ENCODE measurements at regions of chr10 and their contacts with region 1.

Region 1: DNA sequence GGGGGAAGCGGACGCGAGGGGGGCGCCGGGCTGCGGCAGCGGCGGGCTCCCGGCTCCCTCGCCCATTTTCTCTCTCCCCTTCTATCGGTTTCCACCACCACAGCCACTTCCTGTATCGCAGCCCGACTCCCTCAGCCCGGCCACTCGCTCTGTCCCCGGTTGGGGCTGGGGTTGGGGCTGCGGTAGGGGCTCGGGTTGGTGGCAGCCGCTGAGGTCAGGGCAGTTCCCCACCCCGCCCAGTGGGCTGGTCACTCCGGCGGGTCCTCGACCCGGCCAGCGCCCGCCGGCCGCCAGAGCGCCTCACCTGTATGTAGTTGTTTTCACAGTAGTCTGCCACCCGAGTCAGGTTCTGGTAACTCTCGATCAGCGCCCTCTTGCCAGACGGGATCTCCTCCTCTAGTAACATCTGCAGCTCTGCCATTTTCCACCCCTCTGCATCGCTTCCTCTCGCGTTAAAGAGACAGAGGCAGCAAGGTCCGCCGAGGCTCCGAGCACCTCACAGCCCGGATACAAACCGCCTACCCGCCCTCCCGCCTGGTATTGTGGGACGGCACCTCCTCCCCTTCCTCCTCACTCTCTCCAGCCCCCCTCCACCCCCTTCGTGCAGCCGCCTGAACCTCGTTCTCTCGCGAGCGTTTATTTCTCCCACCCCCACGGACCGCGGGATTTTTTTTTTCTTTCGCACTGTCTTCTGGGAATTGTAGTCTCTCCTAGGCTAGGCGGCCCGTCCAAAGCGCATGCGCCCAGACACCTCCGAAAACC is at the start of gene ABI1:
- DNase-seq: peak; percentile 94 to 99 (median 97)
- ATAC-seq: peak; percentile 91
- H3K4me3 ChIP-seq: peak within 1 kb of the TSS; percentile 74 to 98
- H3K4me3 Mint-ChIP-seq: peak within 1 kb of the TSS; percentile 95
- H3K27ac ChIP-seq: peak within 1 kb of the TSS; percentile 88 to 93
- H3K27ac Mint-ChIP-seq: peak within 1 kb of the TSS; percentile 97
- H3K4me1 ChIP-seq: peaks cover 30% of the 10 kb centered on the region
- H3K4me1 Mint-ChIP-seq: peaks cover 29% of the 10 kb centered on the region
- H3K27me3 ChIP-seq: peaks cover 0 to 2% of the 10 kb centered on the region in 2 experiments
- H3K27me3 Mint-ChIP-seq: peaks cover 3% of the 10 kb centered on the region
- CTCF ChIP-seq: no peak
- total RNA-seq, gene ABI1: 91.6 to 94.5 TPM

Region 2: GRCh38 chr10:26437637-26438461 is 422.8 kb before region 1 on chr10 and contains the start of gene APBB1IP:
- CTCF ChIA-PET with region 1: no interaction called
- POLR2A ChIA-PET with region 1: no interaction called
- intact Hi-C with region 1: loop called (anchors 5 to 10 kb)
- DNase-seq: peak; percentile 28 to 79 (median 57)
- ATAC-seq: peak; percentile 43
- H3K4me3 ChIP-seq: peak within 1 kb of the TSS; percentile 85 to 94
- H3K4me3 Mint-ChIP-seq: peak within 1 kb of the TSS; percentile 93
- H3K27ac ChIP-seq: peak within 1 kb of the TSS; percentile 83 to 90
- H3K27ac Mint-ChIP-seq: peak within 1 kb of the TSS; percentile 98
- H3K4me1 ChIP-seq: peaks cover 40% of the 10 kb centered on the region
- H3K4me1 Mint-ChIP-seq: peaks cover 52% of the 10 kb centered on the region
- H3K27me3 ChIP-seq: no peaks in the 10 kb centered on the region
- H3K27me3 Mint-ChIP-seq: no peaks in the 10 kb centered on the region
- CTCF ChIP-seq: no peak
- total RNA-seq, gene APBB1IP: 36.4 to 36.8 TPM

Region 3: GRCh38 chr10:26516540-26517101 is 344.0 kb before region 1 on chr10:
- CTCF ChIA-PET with region 1: no interaction called
- POLR2A ChIA-PET with region 1: no interaction called
- intact Hi-C with region 1: no loop called
- DNase-seq: no peak
- ATAC-seq: no peak
- H3K4me3 ChIP-seq: no peak overlapping the region
- H3K4me3 Mint-ChIP-seq: no peak overlapping the region
- H3K27ac ChIP-seq: no peak overlapping the region
- H3K27ac Mint-ChIP-seq: no peak overlapping the region
- H3K4me1 ChIP-seq: no peaks in the 10 kb centered on the region
- H3K4me1 Mint-ChIP-seq: peaks cover 34% of the 10 kb centered on the region
- H3K27me3 ChIP-seq: no peaks in the 10 kb centered on the region
- H3K27me3 Mint-ChIP-seq: no peaks in the 10 kb centered on the region
- CTCF ChIP-seq: no peak

Region 4: GRCh38 chr10:26642896-26643653 is 217.5 kb before region 1 on chr10:
- CTCF ChIA-PET with region 1: no interaction called
- POLR2A ChIA-PET with region 1: no interaction called
- intact Hi-C with region 1: no loop called
- DNase-seq: peak in 2 of 9 experiments; percentile 34 to 43
- ATAC-seq: no peak
- H3K4me3 ChIP-seq: no peak overlapping the region
- H3K4me3 Mint-ChIP-seq: no peak overlapping the region
- H3K27ac ChIP-seq: no peak overlapping the region
- H3K27ac Mint-ChIP-seq: no peak overlapping the region
- H3K4me1 ChIP-seq: no peaks in the 10 kb centered on the region
- H3K4me1 Mint-ChIP-seq: peaks cover 9% of the 10 kb centered on the region
- H3K27me3 ChIP-seq: no peaks in the 10 kb centered on the region
- H3K27me3 Mint-ChIP-seq: no peaks in the 10 kb centered on the region
- CTCF ChIP-seq: no peak

Region 5: GRCh38 chr10:26697163-26697921 is 163.3 kb before region 1 on chr10 and contains the start of gene PDSS1:
- CTCF ChIA-PET with region 1: no interaction called
- POLR2A ChIA-PET with region 1: interaction called, 3 read pairs
- intact Hi-C with region 1: loop called (anchors 1 kb)
- DNase-seq: peak; percentile 23 to 82 (median 60)
- ATAC-seq: peak; percentile 73
- H3K4me3 ChIP-seq: peak within 1 kb of the TSS; percentile 85 to 92
- H3K4me3 Mint-ChIP-seq: peak within 1 kb of the TSS; percentile 94
- H3K27ac ChIP-seq: peak within 1 kb of the TSS; percentile 69 to 81
- H3K27ac Mint-ChIP-seq: peak within 1 kb of the TSS; percentile 93
- H3K4me1 ChIP-seq: peaks cover 18% of the 10 kb centered on the region
- H3K4me1 Mint-ChIP-seq: peaks cover 35% of the 10 kb centered on the region
- H3K27me3 ChIP-seq: no peaks in the 10 kb centered on the region
- H3K27me3 Mint-ChIP-seq: no peaks in the 10 kb centered on the region
- CTCF ChIP-seq: no peak
- total RNA-seq, gene PDSS1: 3.4 to 3.7 TPM

Region 6: GRCh38 chr10:26773633-26774032 is 87.0 kb before region 1 on chr10:
- CTCF ChIA-PET with region 1: interaction called, 3 read pairs
- POLR2A ChIA-PET with region 1: no interaction called
- intact Hi-C with region 1: loop called in 1 of 2 experiments (anchors 5 kb)
- DNase-seq: no peak
- ATAC-seq: no peak
- H3K4me3 ChIP-seq: no peak overlapping the region
- H3K4me3 Mint-ChIP-seq: no peak overlapping the region
- H3K27ac ChIP-seq: no peak overlapping the region
- H3K27ac Mint-ChIP-seq: no peak overlapping the region
- H3K4me1 ChIP-seq: peaks cover 15% of the 10 kb centered on the region
- H3K4me1 Mint-ChIP-seq: peaks cover 64% of the 10 kb centered on the region
- H3K27me3 ChIP-seq: no peaks in the 10 kb centered on the region
- H3K27me3 Mint-ChIP-seq: no peaks in the 10 kb centered on the region
- CTCF ChIP-seq: no peak

Region 7: DNA sequence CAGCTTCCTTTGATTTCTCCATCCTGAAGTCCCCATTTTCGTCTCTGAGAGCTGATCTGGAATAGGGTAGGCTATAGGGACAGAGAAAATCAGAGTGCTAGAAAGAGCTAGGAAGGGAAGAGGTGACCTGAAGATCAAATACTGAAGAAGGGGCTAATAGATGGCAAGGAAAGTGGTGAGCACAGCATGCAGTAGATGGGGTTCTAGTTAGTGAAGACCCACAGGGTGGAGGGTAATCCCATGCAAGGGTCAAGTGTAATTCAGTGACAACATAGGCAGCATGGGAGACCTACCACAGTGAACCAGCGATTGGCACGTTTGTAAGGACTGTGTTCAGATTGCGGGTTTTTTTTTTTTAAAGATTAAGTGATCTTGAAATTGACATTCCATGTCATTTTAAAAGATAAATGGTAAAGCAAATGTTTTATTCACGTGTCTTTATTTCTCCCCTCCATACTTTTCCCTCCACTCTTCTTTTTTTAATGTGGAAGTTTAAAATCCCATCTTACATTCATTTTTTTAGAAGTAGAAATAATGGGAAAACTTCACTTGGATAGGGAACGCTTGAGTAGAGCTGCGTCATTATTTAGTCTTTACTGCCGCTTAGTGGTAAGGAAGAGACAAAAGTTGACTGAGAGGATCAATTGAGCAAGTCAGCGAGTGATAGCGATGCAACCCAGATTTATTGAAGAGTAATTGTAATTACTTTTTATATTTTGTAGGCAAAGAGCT is 21.1 kb after region 1 on chr10:
- CTCF ChIA-PET with region 1: interaction called, 25 read pairs
- POLR2A ChIA-PET with region 1: no interaction called
- intact Hi-C with region 1: loop called (anchors 1 kb)
- DNase-seq: peak in 2 of 9 experiments; percentile 68 to 71
- ATAC-seq: peak; percentile 64
- H3K4me3 ChIP-seq: no peak overlapping the region
- H3K4me3 Mint-ChIP-seq: no peak overlapping the region
- H3K27ac ChIP-seq: no peak overlapping the region
- H3K27ac Mint-ChIP-seq: no peak overlapping the region
- H3K4me1 ChIP-seq: no peaks in the 10 kb centered on the region
- H3K4me1 Mint-ChIP-seq: peaks cover 3% of the 10 kb centered on the region
- H3K27me3 ChIP-seq: peaks cover 0 to 2% of the 10 kb centered on the region in 2 experiments
- H3K27me3 Mint-ChIP-seq: peaks cover 23% of the 10 kb centered on the region
- CTCF ChIP-seq: peak; percentile 70

Region 8: DNA sequence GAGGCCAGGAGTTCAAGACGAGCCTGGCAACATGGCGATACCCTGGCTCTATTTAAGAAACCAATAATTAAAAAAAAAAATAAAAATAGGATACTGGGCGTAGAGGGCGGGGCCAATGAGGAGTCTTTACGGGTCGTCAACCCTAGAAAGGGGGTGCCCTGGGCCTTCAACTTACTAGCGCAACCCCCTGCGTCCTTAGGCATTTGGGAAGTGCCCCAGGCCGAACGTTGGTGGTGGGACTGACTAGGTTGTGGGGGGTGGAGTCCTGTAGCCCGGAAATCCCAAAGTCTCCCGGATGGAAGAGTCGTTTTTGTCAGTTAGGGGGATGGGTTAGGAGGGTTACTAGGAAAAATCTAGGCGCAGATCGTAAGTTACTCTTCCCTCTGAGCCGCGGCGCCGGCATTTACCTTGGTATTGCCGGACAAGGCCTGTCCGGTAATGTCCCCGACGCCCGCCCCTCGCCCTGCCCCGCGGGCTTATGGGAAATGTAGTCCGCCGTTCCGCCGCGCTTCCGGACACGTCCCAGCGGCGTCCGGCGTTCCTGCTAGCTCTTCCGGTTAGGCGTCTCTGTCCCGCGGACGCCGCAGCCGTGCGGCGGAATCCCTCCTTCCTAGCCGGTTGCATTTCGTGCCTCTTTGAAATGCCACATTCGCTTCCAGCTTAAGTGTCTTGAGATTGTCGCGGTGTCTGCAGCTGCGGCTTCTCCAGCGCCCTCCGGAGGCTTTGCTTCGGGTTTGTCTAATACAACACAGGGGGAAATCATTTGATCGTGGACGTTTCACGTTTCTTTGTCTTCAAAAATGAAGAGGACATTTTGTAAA is 381.2 kb after region 1 on chr10:
- CTCF ChIA-PET with region 1: no interaction called
- POLR2A ChIA-PET with region 1: no interaction called
- intact Hi-C with region 1: loop called in 1 of 2 experiments (anchors 2 kb)
- DNase-seq: peak; percentile 75 to 95 (median 85)
- ATAC-seq: peak; percentile 64
- H3K4me3 ChIP-seq: peak overlapping the region; percentile 87 to 96
- H3K4me3 Mint-ChIP-seq: peak overlapping the region; percentile 91
- H3K27ac ChIP-seq: peak overlapping the region; percentile 84 to 96
- H3K27ac Mint-ChIP-seq: peak overlapping the region; percentile 98
- H3K4me1 ChIP-seq: peaks cover 26% of the 10 kb centered on the region
- H3K4me1 Mint-ChIP-seq: peaks cover 43% of the 10 kb centered on the region
- H3K27me3 ChIP-seq: no peaks in the 10 kb centered on the region
- H3K27me3 Mint-ChIP-seq: no peaks in the 10 kb centered on the region
- CTCF ChIP-seq: no peak

Region 9: DNA sequence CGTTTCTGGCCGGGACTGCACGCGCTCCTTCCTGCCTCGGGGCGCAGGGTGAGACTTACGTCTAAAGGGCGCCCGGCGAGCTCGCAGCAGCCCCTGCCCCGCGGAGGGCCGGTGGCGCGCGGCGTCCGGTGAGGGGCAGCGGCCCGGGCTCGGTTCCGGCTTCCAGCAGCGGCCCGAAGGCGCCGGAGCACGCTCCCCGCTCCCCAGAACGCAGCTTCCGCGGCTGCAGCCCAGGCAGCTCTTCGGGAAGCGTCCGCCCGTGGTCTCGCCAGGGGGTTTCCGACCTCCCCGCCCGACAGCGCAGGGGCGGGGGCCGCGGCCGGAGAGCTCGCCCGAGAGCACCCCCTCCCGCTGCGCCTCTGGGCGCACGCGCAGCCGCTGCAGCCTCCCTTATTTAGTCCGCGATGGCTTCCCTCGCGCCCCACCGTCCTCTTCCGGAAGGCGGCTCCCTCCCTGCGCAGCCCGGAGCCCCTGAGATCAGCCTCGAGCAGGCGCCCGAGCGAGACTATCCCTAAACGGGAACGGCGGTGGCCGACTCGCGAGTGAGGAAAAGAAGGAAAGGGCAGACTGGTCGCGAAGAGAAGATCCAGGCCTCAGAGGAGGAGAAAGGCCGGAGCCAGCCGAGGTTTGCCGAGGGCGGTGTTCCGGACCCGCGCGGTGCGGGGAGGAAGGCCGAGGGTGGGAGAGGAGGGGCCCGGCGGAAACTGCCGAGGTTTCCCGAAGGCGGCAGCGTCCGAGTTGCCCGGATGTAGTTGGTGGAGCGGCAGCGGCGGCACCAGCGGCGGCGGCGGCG is 1672.0 kb after region 1 on chr10 and contains the start of gene WAC:
- CTCF ChIA-PET with region 1: no interaction called
- POLR2A ChIA-PET with region 1: no interaction called
- intact Hi-C with region 1: loop called (anchors 5 to 10 kb)
- DNase-seq: peak; percentile 94 to 99 (median 97)
- ATAC-seq: peak; percentile 79
- H3K4me3 ChIP-seq: peak within 1 kb of the TSS; percentile 74 to 99
- H3K4me3 Mint-ChIP-seq: peak within 1 kb of the TSS; percentile 99
- H3K27ac ChIP-seq: peak within 1 kb of the TSS; percentile 95 to 99
- H3K27ac Mint-ChIP-seq: peak within 1 kb of the TSS; percentile 100
- H3K4me1 ChIP-seq: peaks cover 47% of the 10 kb centered on the region
- H3K4me1 Mint-ChIP-seq: peaks cover 69% of the 10 kb centered on the region
- H3K27me3 ChIP-seq: no peaks in the 10 kb centered on the region
- H3K27me3 Mint-ChIP-seq: no peaks in the 10 kb centered on the region
- CTCF ChIP-seq: no peak
- total RNA-seq, gene WAC: 195 to 200 TPM

Measured in CD8-positive, alpha-beta T cell (primary cell).